ENCODE measurements at regions of chr12 and their contacts with region 1.

Region 1: DNA sequence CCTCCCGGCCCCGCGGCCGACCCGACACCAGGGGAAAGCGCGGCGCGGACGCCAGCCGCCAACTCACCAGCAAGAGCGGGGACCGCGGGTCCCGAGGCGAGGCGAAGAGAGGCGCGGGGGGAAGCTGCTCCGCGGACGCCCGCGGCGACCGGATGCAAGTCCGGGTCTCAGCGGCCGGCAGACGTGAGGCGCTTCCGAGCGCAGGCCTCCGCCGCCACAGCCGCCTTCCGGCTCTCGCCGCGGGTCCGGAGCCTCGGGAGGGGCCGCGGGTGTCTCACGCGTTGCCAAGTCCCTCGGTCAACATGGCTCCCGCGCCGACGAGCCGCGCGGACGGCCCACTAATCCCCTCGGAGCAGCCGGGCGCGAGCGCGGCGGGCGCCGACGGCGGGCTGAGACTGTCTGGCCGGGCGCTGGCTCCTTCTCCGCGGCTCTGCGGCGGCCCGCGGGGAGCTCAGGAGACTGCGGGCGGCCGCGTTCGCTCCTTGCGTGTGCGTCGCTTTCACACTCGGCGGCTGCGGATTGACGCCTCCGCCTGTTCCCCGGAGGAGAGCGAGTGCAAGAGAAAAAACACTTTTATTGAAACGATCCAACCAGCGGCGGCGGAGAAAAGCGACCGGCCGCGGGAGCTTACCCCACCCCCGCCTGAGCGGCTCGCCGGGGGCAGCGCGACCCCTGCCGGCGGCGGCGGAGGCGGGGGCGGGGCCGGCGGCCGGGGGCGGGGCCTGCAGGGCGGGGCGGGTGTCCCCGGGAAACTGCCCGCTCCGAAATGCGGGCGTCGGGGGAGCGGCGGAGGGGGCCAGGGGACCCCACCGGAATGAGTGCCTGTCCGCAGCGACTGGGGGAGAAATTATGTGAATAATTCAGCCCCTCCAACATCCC is at the start of gene CDK17:
- DNase-seq: peak; percentile 83
- H3K4me3 Mint-ChIP-seq: peak within 1 kb of the TSS; percentile 93
- H3K27ac Mint-ChIP-seq: peak within 1 kb of the TSS; percentile 97
- H3K4me1 Mint-ChIP-seq: peaks cover 66% of the 10 kb centered on the region
- H3K27me3 Mint-ChIP-seq: no peaks in the 10 kb centered on the region
- total RNA-seq, gene CDK17: 32.4 and 37.1 TPM in 2 replicates

Region 2: DNA sequence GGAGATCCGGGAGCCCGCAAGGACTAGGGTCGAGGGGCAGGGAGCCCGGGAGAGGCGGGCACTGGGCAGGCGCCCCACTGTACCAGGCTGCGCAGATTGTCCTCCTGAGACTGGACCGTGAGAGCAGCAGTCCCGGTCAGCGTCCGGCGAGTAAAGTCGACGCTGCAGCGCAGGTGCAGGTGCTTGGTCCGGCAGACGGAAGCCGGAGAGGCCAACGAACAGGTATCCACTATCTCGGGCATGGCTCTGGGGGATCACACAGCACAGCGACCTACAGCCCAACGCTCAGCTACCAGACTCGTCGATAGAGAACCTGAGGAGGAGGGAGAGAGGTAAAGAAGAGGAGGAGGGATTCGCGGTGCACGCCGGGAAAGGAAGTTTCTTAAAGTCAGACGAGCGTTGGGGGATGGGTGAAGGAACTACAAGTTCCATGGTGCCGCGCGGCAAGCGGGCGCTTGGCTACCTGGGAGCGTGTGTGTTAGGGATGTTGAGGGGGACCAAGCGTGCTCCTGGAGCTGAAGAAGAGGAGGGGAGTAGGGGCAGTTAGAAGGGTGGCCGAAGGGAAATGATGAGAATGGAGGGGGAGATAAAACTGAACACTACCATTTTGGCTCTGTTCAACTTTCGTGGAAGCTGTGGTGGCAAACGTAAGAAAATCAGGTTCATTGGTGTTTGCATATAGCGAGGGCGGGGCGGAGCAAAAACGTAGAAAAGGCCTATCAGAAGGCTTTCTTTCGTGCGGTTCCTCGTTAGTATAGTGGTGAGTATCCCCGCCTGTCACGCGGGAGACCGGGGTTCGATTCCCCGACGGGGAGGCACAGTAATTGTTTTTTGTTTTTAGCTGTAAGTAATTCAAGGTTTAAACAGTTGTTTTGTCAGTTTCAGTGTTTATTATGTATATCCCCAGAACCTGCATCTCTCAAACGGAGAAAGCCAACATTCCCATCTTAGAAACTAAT is 364.6 kb before region 1 on chr12 and contains the start of gene LTA4H:
- intact Hi-C with region 1: loop called (anchors 1 kb)
- DNase-seq: peak; percentile 93
- H3K4me3 Mint-ChIP-seq: no peak within 1 kb of the TSS
- H3K27ac Mint-ChIP-seq: no peak within 1 kb of the TSS
- H3K4me1 Mint-ChIP-seq: peaks cover 10% of the 10 kb centered on the region
- H3K27me3 Mint-ChIP-seq: no peaks in the 10 kb centered on the region
- total RNA-seq, gene LTA4H: 57.3 and 59.6 TPM in 2 replicates

Region 3: GRCh38 chr12:96211988-96212387 is 188.2 kb before region 1 on chr12:
- intact Hi-C with region 1: loop called (anchors 1 kb)
- DNase-seq: no peak
- H3K4me3 Mint-ChIP-seq: peak overlapping the region; percentile 76
- H3K27ac Mint-ChIP-seq: peak overlapping the region; percentile 76
- H3K4me1 Mint-ChIP-seq: peaks cover 78% of the 10 kb centered on the region
- H3K27me3 Mint-ChIP-seq: no peaks in the 10 kb centered on the region

Region 4: GRCh38 chr12:96343347-96343954 is 56.7 kb before region 1 on chr12:
- intact Hi-C with region 1: loop called (anchors 1 kb)
- DNase-seq: peak; percentile 21
- H3K4me3 Mint-ChIP-seq: peak overlapping the region; percentile 24
- H3K27ac Mint-ChIP-seq: peak overlapping the region; percentile 79
- H3K4me1 Mint-ChIP-seq: peaks cover 54% of the 10 kb centered on the region
- H3K27me3 Mint-ChIP-seq: no peaks in the 10 kb centered on the region

Region 5: DNA sequence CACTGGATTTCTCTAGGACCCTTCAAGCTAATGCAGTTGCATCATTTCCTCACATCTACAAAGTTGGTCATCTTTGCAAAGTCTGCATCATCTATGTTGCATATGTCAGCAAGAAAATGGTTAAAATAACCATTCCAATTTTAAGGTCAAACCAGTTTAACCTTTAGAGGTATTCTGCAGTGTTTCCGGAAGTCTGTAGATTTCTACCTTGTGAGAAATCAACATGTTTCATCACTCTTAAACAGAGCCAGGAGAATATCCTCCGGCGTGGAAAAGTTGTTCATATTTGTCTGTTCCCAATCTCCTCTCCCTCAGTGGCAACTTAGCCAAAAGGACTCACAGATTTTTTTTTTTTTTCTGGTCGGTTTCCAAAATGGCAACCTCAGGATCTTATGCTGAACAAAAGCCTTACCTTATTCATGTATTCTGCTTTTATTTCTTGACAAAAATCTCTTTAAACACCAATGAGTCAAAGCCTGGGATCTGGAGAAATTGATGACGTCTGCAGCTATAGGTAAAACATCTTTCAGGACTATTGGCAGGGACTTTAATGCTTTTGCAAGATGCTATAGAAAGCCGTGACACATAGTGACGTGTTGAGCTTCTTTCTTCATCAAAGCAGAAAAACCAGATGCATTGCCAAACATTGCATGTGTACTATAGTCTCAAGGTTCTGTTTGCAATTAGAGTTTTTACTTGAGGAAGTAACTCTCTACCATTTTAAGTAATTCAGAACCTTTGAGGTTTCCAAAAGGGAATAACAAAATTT is 16.1 kb after region 1 on chr12:
- intact Hi-C with region 1: loop called (anchors 1 kb)
- DNase-seq: no peak
- H3K4me3 Mint-ChIP-seq: no peak overlapping the region
- H3K27ac Mint-ChIP-seq: no peak overlapping the region
- H3K4me1 Mint-ChIP-seq: peaks cover 44% of the 10 kb centered on the region
- H3K27me3 Mint-ChIP-seq: peaks cover 3% of the 10 kb centered on the region

Region 6: GRCh38 chr12:96489103-96490056 is 89.2 kb after region 1 on chr12 and contains the start of gene CFAP54:
- intact Hi-C with region 1: loop called (anchors 1 kb)
- DNase-seq: peak; percentile 92
- H3K4me3 Mint-ChIP-seq: peak within 1 kb of the TSS; percentile 86
- H3K27ac Mint-ChIP-seq: peak within 1 kb of the TSS; percentile 85
- H3K4me1 Mint-ChIP-seq: peaks cover 43% of the 10 kb centered on the region
- H3K27me3 Mint-ChIP-seq: peaks cover 25% of the 10 kb centered on the region
- total RNA-seq, gene CFAP54: 0.17 and 0.34 TPM in 2 replicates

Measured in activated T-helper 1 cell treated with anti-CD3 and anti-CD28 coated beads, Interleukin-12 subunit alpha, Interleukin-12 subunit beta, Interleukin-2, Interleukin-4 antibody, amounts not matched to agents 30 ng/mL and 10 ng/mL and 1 ng/mL, durations not matched to agents 14 hours and 24 hours and 36 hours (primary cell).